Left colon (tissue), 2 donors: ENCODE measurements at regions of chr4 and their contacts with region 1.

Region 1: GRCh38 chr4:110211007-110211769 is 12.8 kb upstream of the ELOVL6 start:
- DNase-seq: peak in 1 of 2 donors; percentile 14
- ATAC-seq: peak; percentile 79

Region 2: GRCh38 chr4:110049951-110050925 is 160.9 kb before region 1 on chr4:
- intact Hi-C with region 1: loop called in 1 of 2 experiments (anchors 5 kb)
- DNase-seq: peak in 1 of 2 donors; percentile 39
- ATAC-seq: peak; percentile 51